WTC11 (cell line): ENCODE measurements at regions of chr7 and their contacts with region 1.

Region 1: DNA sequence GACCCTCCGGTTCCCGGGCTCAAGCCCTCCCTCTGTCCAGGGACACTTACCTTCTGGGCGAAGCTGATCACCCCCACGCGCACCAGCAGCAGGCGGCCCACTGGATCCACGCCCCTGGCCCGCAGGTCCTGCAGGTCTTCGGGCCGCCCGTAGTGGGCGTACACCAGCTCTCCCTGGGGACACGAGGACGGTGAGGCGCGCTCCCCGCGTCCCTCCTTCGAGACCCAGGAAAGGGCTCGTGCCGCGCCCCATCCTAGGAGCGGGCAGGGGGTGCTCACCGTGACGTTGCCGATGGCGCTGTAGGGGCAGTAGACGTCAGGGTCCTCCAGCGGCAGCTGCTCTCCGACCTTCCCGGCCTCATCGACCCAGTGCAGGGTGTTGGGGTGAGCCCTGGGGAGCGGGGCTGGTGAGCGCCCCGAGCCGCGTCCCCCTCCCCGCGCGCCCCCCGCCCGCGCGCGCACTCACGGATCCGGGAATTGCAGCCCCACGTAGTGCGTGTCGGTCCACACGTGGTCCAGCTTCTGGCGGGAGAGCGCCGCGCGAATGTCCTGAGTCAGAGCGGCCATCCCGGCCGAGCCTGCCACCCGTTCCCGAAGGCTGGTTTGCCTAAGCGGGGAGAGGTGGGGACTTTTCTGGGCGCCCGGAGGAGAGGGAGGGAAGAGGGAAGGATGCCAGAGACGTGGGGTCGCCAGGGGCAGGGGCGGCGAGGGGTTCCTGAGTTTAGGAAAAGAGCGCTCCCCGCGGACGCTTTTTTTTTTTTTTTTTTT is 8.2 kb downstream of the TFR2 start:
- DNase-seq: peak; percentile 67
- ATAC-seq: peak; percentile 40
- H3K4me3 Mint-ChIP-seq: peak overlapping the region; percentile 76
- H3K27ac Mint-ChIP-seq: no peak overlapping the region
- H3K4me1 Mint-ChIP-seq: peaks cover 3% of the 10 kb centered on the region
- H3K27me3 Mint-ChIP-seq: peaks cover 41% of the 10 kb centered on the region
- CTCF ChIP-seq: no peak; the same call in 1 of the 2 replicates

Region 2: DNA sequence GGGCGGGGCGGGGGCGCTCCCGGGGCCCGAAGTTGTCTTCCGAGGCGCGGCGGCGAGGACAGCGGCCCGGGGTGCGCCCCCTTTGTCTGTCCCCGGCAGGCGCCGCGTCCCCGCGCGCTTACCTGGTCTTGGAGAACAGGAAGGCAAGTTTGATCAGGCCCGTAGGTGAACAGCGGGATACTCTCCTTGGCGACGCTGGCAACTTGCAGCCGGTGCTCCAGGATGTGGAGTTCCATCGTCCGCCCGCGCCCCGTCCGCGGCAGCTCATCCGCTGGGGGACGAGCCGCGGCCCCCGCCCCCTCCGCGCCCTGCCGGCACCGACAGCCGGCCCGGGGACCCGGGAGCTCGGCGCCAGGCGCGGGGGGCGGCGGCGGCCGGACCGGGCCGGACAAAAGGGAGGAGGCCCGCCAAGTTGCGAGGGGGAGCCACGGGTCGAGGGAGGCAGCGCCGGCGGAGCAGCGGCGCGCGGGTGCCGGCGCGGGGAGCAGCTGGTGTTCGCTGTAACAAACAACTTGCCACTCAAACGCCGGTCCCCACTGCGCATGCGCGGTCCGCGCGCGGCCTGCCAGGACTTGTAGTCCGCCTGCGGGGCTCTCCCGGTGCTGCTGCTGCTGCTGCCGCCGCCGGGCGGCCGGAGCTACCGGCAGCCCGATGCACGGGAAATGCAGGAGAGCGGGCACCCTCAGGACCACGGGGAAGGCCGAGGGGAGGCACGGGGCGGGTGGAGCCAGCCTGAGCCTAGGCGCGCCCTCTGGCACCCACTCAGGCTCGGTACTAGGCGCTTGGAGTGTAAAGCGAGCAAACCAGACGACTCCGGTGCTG is 361.2 kb before region 1 on chr7:
- CTCF ChIA-PET with region 1: no interaction called
- POLR2A ChIA-PET with region 1: no interaction called
- DNase-seq: peak; percentile 100
- ATAC-seq: peak; percentile 73
- H3K4me3 Mint-ChIP-seq: peak overlapping the region; percentile 75
- H3K27ac Mint-ChIP-seq: no peak overlapping the region
- H3K4me1 Mint-ChIP-seq: peaks cover 31% of the 10 kb centered on the region
- H3K27me3 Mint-ChIP-seq: peaks cover 6% of the 10 kb centered on the region
- CTCF ChIP-seq: no peak

Region 3: DNA sequence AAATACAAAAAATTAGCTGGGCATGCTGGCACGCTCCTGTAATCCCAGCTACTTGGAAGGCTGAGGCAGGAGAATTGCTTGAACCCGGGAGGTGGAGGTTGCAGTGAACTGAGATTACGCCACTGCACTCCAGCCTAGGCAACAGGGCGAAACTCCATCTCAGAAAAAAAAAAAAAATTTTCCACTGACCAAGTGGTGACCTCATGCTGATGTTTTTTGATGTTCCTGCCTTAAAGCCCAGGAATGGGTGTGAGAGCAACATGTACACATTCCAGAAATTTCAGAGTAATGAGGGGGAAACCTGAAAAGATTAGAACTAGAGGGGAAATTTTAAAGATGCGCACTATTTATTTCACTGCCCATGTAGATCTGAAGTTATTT is 129.8 kb before region 1 on chr7:
- CTCF ChIA-PET with region 1: no interaction called
- POLR2A ChIA-PET with region 1: no interaction called
- DNase-seq: no peak
- ATAC-seq: no peak
- H3K4me3 Mint-ChIP-seq: no peak overlapping the region
- H3K27ac Mint-ChIP-seq: no peak overlapping the region
- H3K4me1 Mint-ChIP-seq: no peaks in the 10 kb centered on the region
- H3K27me3 Mint-ChIP-seq: no peaks in the 10 kb centered on the region; the same call in 1 of the 2 replicates
- CTCF ChIP-seq: no peak

Region 4: GRCh38 chr7:100586266-100587025 is 46.7 kb before region 1 on chr7 and contains the start of gene FBXO24:
- CTCF ChIA-PET with region 1: interaction called, 35 read pairs
- POLR2A ChIA-PET with region 1: interaction called, 10 read pairs
- DNase-seq: peak; percentile 99
- ATAC-seq: peak; percentile 85
- H3K4me3 Mint-ChIP-seq: peak within 1 kb of the TSS; percentile 99
- H3K27ac Mint-ChIP-seq: peak within 1 kb of the TSS; percentile 100
- H3K4me1 Mint-ChIP-seq: peaks cover 42% of the 10 kb centered on the region
- H3K27me3 Mint-ChIP-seq: peaks cover 30% of the 10 kb centered on the region
- CTCF ChIP-seq: no peak
- total RNA-seq, gene FBXO24: 0.70 to 1.3 TPM (median 0.94 TPM) in 3 replicates

Region 5: GRCh38 chr7:100649826-100650547 is 16.9 kb after region 1 on chr7:
- CTCF ChIA-PET with region 1: interaction called, 67 read pairs
- POLR2A ChIA-PET with region 1: interaction called, 5 read pairs
- DNase-seq: no peak
- ATAC-seq: no peak
- H3K4me3 Mint-ChIP-seq: no peak overlapping the region
- H3K27ac Mint-ChIP-seq: no peak overlapping the region
- H3K4me1 Mint-ChIP-seq: peaks cover 6% of the 10 kb centered on the region
- H3K27me3 Mint-ChIP-seq: peaks cover 27% of the 10 kb centered on the region
- CTCF ChIP-seq: no peak

Region 6: DNA sequence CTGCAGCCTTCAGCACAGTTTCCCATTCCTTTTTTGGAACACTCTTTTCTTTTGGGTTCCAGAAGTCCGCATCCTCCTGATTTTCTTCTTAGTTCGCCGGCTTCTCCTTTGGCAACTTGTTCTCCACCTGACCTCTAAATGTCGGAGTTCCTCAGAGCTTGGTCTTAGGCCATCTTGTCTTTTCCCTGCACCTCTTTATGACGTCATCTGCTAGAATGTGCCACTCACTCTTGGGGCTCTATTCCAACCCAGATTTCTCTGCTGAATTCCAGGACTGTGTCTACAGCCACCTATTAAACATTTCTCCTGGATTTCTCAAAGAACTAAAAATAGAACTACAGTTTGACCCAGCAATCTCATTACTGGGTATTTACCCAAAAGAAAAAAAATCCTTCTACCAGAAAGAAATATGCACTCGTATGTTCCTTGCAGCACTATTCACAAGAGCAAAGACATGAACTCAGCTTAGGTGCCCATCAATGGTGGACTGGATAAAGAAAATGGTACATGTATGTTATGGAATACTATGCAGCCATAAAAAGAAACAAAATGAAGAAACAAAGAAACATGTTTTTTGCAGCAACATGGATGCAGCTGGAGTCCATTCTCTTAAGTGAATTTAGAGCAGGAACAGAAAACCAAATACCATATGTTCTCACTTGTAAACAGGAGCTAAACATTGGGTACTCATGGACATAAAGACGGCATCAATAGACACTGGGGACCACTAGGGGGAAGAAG is 34.7 kb after region 1 on chr7:
- CTCF ChIA-PET with region 1: interaction called, 24 read pairs
- POLR2A ChIA-PET with region 1: interaction called, 3 read pairs
- DNase-seq: no peak
- ATAC-seq: no peak
- H3K4me3 Mint-ChIP-seq: no peak overlapping the region
- H3K27ac Mint-ChIP-seq: no peak overlapping the region
- H3K4me1 Mint-ChIP-seq: peaks cover 4% of the 10 kb centered on the region
- H3K27me3 Mint-ChIP-seq: peaks cover 57% of the 10 kb centered on the region
- CTCF ChIP-seq: no peak

Region 7: GRCh38 chr7:100680167-100680575 is 47.0 kb after region 1 on chr7:
- CTCF ChIA-PET with region 1: interaction called, 11 read pairs
- POLR2A ChIA-PET with region 1: interaction called, 8 read pairs
- DNase-seq: no peak
- ATAC-seq: no peak
- H3K4me3 Mint-ChIP-seq: no peak overlapping the region
- H3K27ac Mint-ChIP-seq: peak overlapping the region; percentile 62; the same call in 1 of the 2 replicates
- H3K4me1 Mint-ChIP-seq: peaks cover 11% of the 10 kb centered on the region
- H3K27me3 Mint-ChIP-seq: no peaks in the 10 kb centered on the region
- CTCF ChIP-seq: no peak